OCI-LY7 (cell line): ENCODE measurements at regions of chr1 and their contacts with region 1.

Region 1: GRCh38 chr1:172398970-172399755 is 21.3 kb upstream of the C1orf105 start:
- DNase-seq: peak; percentile 48
- H3K4me3 ChIP-seq: peak overlapping the region; percentile 42
- H3K27ac ChIP-seq: no peak overlapping the region
- H3K4me1 ChIP-seq: peaks cover 13% of the 10 kb centered on the region
- CTCF ChIP-seq: peak; percentile 90

Region 2: GRCh38 chr1:172002725-172003345 is 396.3 kb before region 1 on chr1:
- CTCF ChIA-PET with region 1: no interaction called
- POLR2A ChIA-PET with region 1: no interaction called
- intact Hi-C with region 1: loop called (anchors 1 kb)
- DNase-seq: peak; percentile 55
- H3K4me3 ChIP-seq: no peak overlapping the region
- H3K27ac ChIP-seq: no peak overlapping the region
- H3K4me1 ChIP-seq: no peaks in the 10 kb centered on the region
- CTCF ChIP-seq: peak; percentile 92

Region 3: GRCh38 chr1:172089768-172090510 is 309.2 kb before region 1 on chr1:
- CTCF ChIA-PET with region 1: no interaction called
- POLR2A ChIA-PET with region 1: no interaction called
- intact Hi-C with region 1: loop called (anchors 1 kb)
- DNase-seq: peak; percentile 30
- H3K4me3 ChIP-seq: no peak overlapping the region
- H3K27ac ChIP-seq: no peak overlapping the region
- H3K4me1 ChIP-seq: no peaks in the 10 kb centered on the region
- CTCF ChIP-seq: peak; percentile 72

Region 4: DNA sequence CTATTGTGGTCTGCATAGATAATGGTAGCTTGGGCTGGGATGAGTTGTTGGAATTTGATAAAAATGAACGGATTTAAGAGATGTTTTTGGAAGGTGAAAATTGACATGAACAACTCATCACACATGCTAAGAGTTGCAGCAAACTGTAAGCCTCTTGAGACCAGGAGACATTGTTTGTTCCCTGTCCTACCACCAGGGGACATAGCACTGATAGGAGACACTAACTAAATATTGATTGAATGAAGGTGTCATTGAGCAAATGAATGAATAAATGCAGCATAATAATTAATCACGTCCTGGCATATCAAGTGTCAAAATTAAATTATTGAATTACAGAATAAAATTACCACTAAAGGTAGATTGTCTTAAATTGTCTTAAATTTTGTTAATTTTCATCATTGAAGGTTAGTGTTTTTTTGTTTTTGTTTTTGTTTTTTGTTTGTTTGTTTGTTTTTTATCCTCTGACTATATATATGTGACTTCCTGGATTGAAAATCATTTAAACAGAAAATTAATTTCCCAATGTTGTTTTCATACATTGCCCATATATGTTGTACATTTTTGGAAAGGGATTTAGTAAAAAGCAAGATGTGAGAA is 264.0 kb before region 1 on chr1:
- CTCF ChIA-PET with region 1: no interaction called
- POLR2A ChIA-PET with region 1: interaction called, 3 read pairs
- intact Hi-C with region 1: loop called (anchors 2 kb)
- DNase-seq: peak; percentile 43
- H3K4me3 ChIP-seq: no peak overlapping the region
- H3K27ac ChIP-seq: no peak overlapping the region
- H3K4me1 ChIP-seq: no peaks in the 10 kb centered on the region
- CTCF ChIP-seq: peak; percentile 76

Region 5: DNA sequence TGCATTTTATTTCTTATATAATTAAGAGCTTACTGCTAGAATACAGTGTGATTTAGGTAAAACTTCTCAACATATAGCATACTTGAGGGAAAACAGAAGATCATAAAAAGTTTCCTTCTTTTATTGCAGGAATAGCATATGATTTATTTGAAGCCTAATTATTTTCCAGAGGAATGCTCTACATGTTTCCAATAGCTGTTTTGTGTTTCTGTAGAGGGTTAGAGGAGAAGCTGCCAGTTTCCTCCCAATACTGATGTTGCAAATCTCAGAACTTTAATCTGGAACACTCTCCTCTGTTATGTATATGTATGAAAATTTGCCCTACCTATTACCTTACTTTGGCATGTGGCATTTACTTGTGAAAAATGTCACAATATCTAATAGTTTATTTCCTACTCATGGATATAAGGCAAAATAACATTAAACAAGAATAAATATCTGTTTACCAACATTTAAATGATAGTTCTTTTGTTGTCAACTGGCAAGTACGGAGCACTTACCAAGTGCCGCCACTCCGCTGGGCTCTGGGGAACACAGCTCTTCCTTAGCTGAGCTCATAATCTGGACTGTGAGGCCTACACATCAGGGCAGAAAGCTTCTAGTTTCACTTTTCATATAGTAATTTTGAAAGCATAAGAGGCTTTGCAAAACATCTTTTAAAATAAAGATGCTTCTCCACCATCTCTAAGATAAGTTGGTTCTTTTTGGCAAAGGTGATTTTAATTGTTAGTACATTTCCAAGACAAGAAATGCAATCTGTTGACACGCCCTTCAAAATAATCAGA is 218.5 kb before region 1 on chr1:
- CTCF ChIA-PET with region 1: no interaction called
- POLR2A ChIA-PET with region 1: no interaction called
- intact Hi-C with region 1: loop called (anchors 5 kb)
- DNase-seq: no peak
- H3K4me3 ChIP-seq: peak overlapping the region; percentile 32
- H3K27ac ChIP-seq: no peak overlapping the region
- H3K4me1 ChIP-seq: peaks cover 32% of the 10 kb centered on the region
- CTCF ChIP-seq: no peak

Region 6: DNA sequence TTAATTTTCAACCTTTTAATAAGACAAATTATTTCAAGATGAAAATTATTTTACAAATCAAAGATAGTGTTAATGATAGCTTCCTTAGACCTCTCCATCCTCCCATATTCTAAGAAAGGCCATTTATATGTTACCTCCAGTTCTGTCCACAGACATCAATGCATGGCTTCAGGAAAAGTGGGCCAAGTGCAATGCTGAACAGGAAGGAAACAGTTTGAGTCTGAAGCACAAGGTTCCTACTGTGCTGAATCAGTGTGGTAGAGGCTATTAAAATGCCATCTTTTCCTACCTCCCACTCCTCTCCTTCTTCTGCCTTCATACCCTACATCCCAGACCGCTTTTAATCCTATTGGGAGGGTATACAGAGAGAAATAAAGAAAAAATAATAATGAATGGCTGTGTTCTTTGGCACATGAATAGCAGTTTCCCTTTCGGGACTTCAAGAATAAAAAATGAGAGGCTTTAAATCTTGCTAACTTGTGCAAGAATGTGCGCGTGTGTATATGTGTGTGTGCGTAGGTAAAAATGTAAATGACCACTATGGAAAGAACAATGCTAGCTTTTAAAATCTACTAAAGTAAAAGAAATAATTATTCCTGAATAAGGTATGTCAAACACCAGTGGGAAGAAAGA is 41.3 kb before region 1 on chr1:
- CTCF ChIA-PET with region 1: interaction called, 3 read pairs
- POLR2A ChIA-PET with region 1: interaction called, 6 read pairs
- intact Hi-C with region 1: loop called (anchors 2 kb)
- DNase-seq: peak; percentile 22
- H3K4me3 ChIP-seq: peak overlapping the region; percentile 37
- H3K27ac ChIP-seq: peak overlapping the region; percentile 51
- H3K4me1 ChIP-seq: peaks cover 36% of the 10 kb centered on the region
- CTCF ChIP-seq: no peak

Region 7: DNA sequence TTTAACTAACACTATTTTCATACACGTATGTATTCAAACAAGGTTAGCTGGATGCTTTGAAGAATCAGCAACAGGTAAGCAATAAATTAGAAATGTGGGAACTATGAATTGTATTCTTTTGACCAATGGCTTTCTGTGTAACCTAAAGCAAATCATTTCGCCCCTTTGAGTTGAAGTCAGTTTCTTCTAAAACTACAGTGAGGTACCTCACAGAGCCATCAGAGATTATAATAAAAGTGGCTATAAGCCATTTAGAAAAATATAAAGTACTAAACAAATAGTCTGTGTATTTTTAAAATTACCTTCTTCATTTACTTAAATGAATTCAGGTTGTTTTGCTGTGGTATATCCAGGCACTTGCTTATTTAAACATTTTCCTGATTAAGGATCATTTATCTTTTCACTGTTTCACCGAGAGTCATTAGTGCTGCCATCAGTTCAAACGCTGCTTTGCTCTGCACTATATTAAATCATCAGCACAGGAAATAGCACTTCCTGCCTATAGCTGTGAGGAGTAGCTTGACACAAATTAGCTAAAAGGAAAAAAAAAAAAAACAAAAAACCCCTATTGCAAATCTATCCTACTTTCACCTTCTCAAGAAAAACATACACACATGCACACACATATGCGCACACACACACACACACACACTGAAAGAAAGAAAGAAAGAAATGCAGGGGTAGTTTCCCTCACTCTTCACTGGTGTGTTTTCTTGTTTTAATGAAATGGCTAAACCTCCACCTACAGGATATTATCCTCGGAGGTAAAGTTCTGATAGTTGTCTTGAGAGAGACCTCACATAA is 18.5 kb before region 1 on chr1:
- CTCF ChIA-PET with region 1: no interaction called
- POLR2A ChIA-PET with region 1: interaction called, 18 read pairs
- intact Hi-C with region 1: no loop called
- DNase-seq: peak; percentile 78
- H3K4me3 ChIP-seq: peak overlapping the region; percentile 54
- H3K27ac ChIP-seq: peak overlapping the region; percentile 72
- H3K4me1 ChIP-seq: peaks cover 37% of the 10 kb centered on the region
- CTCF ChIP-seq: 0 out of 2 replicates have a peak, but pooled peaks have one; percentile 23

Region 8: GRCh38 chr1:172613294-172613693 is 214.1 kb after region 1 on chr1:
- CTCF ChIA-PET with region 1: no interaction called
- POLR2A ChIA-PET with region 1: no interaction called
- intact Hi-C with region 1: no loop called
- DNase-seq: no peak
- H3K4me3 ChIP-seq: no peak overlapping the region
- H3K27ac ChIP-seq: no peak overlapping the region
- H3K4me1 ChIP-seq: no peaks in the 10 kb centered on the region
- CTCF ChIP-seq: no peak